Activated CD4-positive, alpha-beta T cell treated with anti-CD3 and anti-CD28 coated beads, Interleukin-2, amount 10 ng/mL, durations not matched to agents 24 days and 14 days (primary cell): ENCODE measurements at regions of chr5 and their contacts with region 1.

Region 1: DNA sequence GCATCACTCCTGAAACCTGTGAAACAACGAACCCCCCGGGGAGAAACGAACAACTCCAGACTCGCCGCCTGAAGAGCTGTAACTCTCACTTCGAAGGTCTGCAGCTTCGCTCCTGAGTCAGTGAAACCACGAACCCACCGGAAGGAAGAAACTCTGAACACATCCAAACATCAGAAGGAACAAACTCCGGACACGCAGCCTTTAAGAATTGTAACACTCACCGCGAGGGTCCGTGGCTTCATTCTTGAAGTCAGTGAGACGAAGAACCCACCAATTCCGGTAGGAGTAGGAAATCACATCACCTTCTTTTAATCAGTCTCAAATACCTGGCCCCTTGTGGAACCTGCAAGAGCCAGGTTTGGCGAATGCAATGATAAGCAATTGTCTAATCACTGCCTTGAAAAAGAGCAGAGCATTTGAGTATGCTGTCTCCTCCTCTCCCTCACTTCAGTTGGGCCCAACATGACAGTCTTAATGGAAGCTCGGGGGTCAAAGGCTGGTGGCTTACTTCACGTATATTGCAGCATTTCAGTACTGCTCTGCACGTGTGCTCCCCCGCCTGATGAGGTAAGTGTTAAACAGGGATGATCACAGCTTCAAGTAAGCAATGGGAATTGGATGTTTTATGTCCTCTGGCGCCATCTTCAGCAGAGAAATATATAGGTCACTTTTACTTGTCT is 473 bp downstream of the IRGM start:
- DNase-seq: peak; percentile 90
- H3K4me3 Mint-ChIP-seq: peak overlapping the region; percentile 80
- H3K27ac Mint-ChIP-seq: peak overlapping the region; percentile 85
- H3K4me1 Mint-ChIP-seq: peaks cover 30% of the 10 kb centered on the region
- H3K27me3 Mint-ChIP-seq: peaks cover 3% of the 10 kb centered on the region

Region 2: DNA sequence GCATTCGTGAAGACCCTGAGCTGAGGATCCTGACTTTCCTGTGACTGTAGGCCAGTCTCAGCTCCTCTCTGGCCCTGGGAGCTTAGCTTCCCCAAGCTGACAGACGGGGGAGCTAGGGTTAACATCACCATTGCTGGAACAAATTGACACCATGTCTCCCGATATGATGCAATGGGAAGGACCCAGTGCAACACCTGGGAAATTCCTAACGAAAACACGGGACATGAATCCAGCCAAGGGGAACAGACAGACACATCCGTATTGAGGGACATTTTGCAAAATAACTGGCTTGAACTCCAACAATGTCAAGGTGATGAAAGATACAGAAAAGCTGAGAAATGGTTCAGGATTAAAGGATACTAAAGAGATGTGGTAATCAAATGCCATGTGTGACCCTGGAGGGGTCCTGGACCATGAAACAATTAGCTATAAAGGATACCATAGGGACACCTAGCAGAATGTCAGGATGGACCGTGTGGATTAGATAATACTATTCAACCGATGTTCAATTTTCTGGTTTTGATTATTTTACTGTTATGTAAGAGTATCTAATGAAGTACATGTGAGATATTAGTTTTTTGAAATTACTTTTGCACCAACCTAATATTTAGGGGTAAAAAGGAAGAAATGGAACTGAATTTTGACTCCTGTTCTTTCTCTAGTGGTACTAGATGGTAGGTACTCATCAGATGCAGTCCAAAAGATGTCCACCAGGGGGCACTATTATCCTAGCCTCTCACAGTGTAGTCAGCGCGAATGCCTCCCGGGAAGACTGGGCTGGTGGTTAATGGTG is 286.2 kb before region 1 on chr5:
- intact Hi-C with region 1: loop called (anchors 1 kb)
- DNase-seq: peak; percentile 95
- H3K4me3 Mint-ChIP-seq: no peak overlapping the region
- H3K27ac Mint-ChIP-seq: no peak overlapping the region
- H3K4me1 Mint-ChIP-seq: no peaks in the 10 kb centered on the region
- H3K27me3 Mint-ChIP-seq: peaks cover 5% of the 10 kb centered on the region

Region 3: GRCh38 chr5:150700594-150701293 is 146.1 kb before region 1 on chr5 and contains the start of gene RBM22:
- intact Hi-C with region 1: loop called (anchors 1 kb)
- DNase-seq: peak; percentile 98
- H3K4me3 Mint-ChIP-seq: peak within 1 kb of the TSS; percentile 53
- H3K27ac Mint-ChIP-seq: no peak within 1 kb of the TSS
- H3K4me1 Mint-ChIP-seq: peaks cover 12% of the 10 kb centered on the region
- H3K27me3 Mint-ChIP-seq: no peaks in the 10 kb centered on the region
- total RNA-seq, gene RBM22: 69.6 and 78.4 TPM in 2 replicates

Region 4: GRCh38 chr5:150789943-150790611 is 56.7 kb before region 1 on chr5:
- intact Hi-C with region 1: loop called (anchors 2 kb)
- DNase-seq: peak; percentile 89
- H3K4me3 Mint-ChIP-seq: peak overlapping the region; percentile 82
- H3K27ac Mint-ChIP-seq: peak overlapping the region; percentile 84
- H3K4me1 Mint-ChIP-seq: peaks cover 55% of the 10 kb centered on the region
- H3K27me3 Mint-ChIP-seq: no peaks in the 10 kb centered on the region

Region 5: DNA sequence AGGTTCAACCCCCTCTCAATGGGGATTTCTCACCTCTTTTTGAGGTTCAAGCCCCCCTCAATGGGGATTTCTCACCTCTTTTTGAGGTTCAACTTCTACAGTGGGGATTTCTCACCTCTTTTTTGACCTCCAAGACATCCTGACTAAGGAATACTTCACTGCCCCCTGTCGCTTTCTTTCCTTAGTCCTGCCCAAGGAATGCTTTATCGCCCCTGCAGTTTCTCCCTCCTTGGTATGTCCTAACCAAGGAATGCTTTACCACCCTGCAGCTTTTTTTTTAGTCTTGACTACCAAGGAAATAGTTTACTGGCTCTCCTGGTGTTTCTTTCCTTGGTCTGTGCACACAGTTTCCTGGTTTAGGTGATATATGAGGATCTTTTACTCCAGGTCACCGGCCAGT is 10.1 kb before region 1 on chr5:
- intact Hi-C with region 1: no loop called
- DNase-seq: no peak
- H3K4me3 Mint-ChIP-seq: no peak overlapping the region
- H3K27ac Mint-ChIP-seq: no peak overlapping the region
- H3K4me1 Mint-ChIP-seq: peaks cover 2% of the 10 kb centered on the region
- H3K27me3 Mint-ChIP-seq: peaks cover 23% of the 10 kb centered on the region

Region 6: DNA sequence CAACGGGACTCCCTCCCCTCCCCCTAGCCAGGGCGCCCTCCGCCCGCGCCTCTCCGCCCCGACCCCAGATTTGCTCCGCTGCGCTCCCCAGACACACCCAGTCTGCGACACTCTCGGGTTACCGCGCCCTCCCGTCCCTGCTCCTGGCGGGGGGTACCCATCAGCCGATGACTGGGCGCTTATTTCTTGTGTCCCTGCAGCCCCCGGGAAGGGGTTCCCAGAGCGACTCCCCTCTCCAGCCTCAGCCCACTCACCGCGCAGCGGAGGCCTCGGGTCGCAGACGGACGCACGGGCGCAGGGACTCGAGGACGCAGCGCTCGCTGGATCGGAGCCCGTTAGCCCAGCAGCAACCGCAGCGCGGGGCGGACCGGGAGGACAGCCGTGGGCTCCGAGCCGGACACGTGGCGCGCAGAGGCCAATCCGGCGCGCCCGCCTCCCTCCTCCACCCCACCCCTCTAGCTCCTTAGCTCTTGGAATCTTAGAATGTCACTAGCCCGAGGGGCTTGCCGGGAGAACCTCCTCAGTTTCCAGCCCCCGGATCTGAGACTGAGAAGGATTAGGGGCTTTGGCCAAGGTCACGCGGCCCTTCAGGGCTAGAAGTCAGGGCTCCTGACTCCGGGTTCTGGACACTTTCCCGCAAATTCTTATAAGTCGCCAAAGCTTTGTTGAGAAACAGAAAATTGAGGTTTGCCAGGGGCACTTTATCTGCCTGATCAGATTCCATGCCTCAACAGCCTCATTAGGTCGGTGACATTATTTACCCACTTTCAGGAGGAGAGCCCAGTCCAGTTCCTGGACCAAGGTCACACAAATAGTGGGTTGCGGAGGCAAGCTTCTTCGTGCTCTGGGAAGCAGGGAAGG is 310.9 kb after region 1 on chr5 and contains the start of gene ANXA6:
- intact Hi-C with region 1: loop called (anchors 10 kb)
- DNase-seq: peak; percentile 92
- H3K4me3 Mint-ChIP-seq: peak within 1 kb of the TSS; percentile 98
- H3K27ac Mint-ChIP-seq: peak within 1 kb of the TSS; percentile 95
- H3K4me1 Mint-ChIP-seq: peaks cover 53% of the 10 kb centered on the region
- H3K27me3 Mint-ChIP-seq: no peaks in the 10 kb centered on the region
- total RNA-seq, gene ANXA6: 314 and 315 TPM in 2 replicates